Mammary epithelial cell (primary cell): ENCODE measurements at regions of chr2 and their contacts with region 1.

Region 1: DNA sequence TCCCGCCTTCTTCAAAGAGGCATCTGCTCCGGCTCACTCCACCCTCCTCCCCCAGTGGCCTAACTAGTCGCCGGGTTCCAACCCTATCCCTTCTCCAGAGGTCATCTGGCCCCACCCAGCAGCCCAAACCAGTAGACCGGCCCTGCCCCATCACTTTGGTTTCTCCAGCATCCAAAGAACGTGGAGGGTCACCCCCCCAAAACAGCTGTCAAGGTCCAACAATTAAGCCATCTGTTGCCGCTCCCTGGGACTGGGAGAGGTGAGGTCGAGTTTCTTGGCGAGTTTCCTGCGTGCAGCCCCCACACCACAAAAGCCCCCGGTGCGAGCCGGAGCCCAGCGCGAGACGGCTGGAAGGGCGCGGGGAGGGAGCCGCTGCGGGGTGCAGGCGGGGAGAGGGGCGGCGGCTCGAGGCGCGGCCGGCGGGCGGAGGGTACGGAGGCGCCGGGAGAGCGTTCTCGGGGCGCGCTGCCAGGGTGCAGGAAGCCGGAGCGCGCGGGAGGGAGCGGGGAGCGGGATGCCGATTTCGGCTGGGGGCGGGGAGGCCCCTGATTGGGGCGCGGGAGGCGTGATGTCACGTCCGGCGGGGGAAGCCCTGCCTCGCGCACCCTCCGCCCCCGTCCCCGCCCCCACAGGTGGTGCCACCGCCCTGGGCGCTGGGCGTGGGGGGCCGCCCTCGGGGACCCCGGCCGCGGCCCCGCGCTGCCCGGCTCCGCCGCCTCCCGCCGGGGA is 571 bp upstream of the GPC1 start:
- DNase-seq: peak; percentile 91
- H3K4me3 ChIP-seq: peak overlapping the region; percentile 65 to 84 (median 70)
- H3K27ac ChIP-seq: peak overlapping the region; percentile 83
- H3K4me1 ChIP-seq: peaks cover 48% of the 10 kb centered on the region
- H3K27me3 ChIP-seq: no peaks in the 10 kb centered on the region
- CTCF ChIP-seq: no peak

Region 2: DNA sequence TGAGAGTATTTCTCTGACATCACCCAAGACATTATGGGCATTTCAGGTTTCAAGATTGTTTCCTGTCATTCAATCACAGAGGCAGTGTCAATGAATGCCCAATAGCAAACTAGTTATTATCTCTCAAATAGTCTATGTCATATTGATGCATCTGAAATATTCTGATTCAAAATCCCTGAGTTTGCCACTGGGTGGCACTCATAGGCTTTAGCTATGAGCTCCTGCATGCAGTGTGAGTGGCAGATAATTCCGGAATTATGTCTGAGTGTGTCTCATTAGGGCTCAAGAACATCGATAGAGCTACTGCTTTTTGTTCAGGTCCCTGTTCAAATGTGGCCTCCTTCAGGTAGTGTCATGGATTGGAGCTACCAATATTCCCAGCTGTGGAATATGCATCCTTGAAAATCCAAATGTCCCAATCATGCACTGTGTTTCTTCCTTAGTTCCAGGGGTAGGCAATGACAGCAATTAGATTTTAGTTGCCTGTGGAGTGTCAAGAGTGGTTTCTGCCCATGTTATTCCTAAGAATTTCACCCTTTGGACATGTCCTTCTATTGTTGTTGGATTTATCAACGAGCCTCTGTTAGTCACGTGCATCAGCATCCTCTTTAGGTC is 373.8 kb before region 1 on chr2:
- CTCF ChIA-PET with region 1: no interaction called
- dilution Hi-C with region 1: no loop called
- in situ Hi-C with region 1: no loop called
- intact Hi-C with region 1: loop called (anchors 5 kb)
- DNase-seq: peak; percentile 45
- H3K4me3 ChIP-seq: no peak overlapping the region
- H3K27ac ChIP-seq: no peak overlapping the region
- H3K4me1 ChIP-seq: no peaks in the 10 kb centered on the region
- H3K27me3 ChIP-seq: peaks cover 6% of the 10 kb centered on the region
- CTCF ChIP-seq: peak; percentile 37 to 74

Region 3: DNA sequence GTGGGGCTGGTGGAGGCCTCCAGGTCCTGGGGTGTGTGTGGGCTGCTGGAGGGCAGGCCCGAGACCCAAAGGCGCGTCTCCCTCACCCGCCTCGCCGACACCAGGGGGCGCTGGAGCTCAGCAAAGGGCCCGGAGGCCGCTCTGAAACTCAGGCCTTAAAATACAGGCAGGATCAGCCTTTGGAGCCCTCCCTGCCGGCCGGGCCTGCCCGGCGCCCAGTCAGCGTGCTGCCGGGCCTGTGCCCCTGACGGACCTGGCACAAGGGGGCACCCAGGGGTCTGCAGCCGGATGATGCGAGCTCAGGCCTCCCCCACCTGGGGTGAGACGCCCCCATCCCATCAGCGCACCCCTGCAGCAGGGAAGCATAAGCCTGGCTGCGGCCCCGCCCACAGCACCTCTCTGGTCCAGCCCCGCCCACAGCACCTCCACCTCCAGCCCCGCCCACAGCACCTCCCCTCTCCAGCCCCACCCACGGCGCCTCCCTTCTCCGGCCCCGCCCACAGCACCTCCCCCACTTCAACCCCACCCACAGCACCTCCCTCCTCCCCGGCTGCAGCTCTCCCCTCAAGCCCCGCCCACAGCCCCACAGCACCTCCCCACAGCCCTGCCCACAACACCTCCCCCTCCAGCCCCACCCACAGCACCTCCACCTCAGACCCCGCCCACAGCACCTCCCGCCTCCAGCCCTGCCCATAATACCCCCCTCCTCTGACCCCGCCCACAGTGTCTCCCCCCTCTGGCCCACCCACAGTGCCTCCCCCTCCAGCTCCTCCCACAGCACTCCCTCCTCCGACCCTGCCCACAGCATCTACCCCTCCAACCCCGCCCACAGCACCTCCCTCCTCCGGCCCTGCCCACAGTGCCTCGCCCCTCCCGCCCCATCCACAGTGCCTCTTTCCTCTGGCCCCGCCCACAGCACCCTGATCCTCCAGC is 201.7 kb before region 1 on chr2:
- CTCF ChIA-PET with region 1: no interaction called
- dilution Hi-C with region 1: loop called (anchors 10 kb)
- in situ Hi-C with region 1: loop called (anchors 5 kb)
- intact Hi-C with region 1: loop called (anchors 1 kb)
- DNase-seq: peak; percentile 84
- H3K4me3 ChIP-seq: peak overlapping the region; percentile 39 to 52 (median 50)
- H3K27ac ChIP-seq: no peak overlapping the region
- H3K4me1 ChIP-seq: peaks cover 24% of the 10 kb centered on the region
- H3K27me3 ChIP-seq: no peaks in the 10 kb centered on the region
- CTCF ChIP-seq: peak; percentile 64 to 93

Region 4: GRCh38 chr2:240303896-240304745 is 130.8 kb before region 1 on chr2:
- CTCF ChIA-PET with region 1: no interaction called
- dilution Hi-C with region 1: no loop called
- in situ Hi-C with region 1: no loop called
- intact Hi-C with region 1: loop called (anchors 2 kb)
- DNase-seq: no peak
- H3K4me3 ChIP-seq: no peak overlapping the region
- H3K27ac ChIP-seq: no peak overlapping the region
- H3K4me1 ChIP-seq: no peaks in the 10 kb centered on the region
- H3K27me3 ChIP-seq: no peaks in the 10 kb centered on the region
- CTCF ChIP-seq: no peak

Region 5: GRCh38 chr2:240369801-240370585 is 64.9 kb before region 1 on chr2:
- CTCF ChIA-PET with region 1: no interaction called
- dilution Hi-C with region 1: no loop called
- in situ Hi-C with region 1: loop called in 1 of 2 experiments (anchors 10 kb)
- intact Hi-C with region 1: loop called (anchors 1 kb)
- DNase-seq: peak; percentile 94
- H3K4me3 ChIP-seq: no peak overlapping the region
- H3K27ac ChIP-seq: peak overlapping the region; percentile 75
- H3K4me1 ChIP-seq: peaks cover 32% of the 10 kb centered on the region
- H3K27me3 ChIP-seq: no peaks in the 10 kb centered on the region
- CTCF ChIP-seq: peak in 1 of 2 donors; percentile 16

Region 6: DNA sequence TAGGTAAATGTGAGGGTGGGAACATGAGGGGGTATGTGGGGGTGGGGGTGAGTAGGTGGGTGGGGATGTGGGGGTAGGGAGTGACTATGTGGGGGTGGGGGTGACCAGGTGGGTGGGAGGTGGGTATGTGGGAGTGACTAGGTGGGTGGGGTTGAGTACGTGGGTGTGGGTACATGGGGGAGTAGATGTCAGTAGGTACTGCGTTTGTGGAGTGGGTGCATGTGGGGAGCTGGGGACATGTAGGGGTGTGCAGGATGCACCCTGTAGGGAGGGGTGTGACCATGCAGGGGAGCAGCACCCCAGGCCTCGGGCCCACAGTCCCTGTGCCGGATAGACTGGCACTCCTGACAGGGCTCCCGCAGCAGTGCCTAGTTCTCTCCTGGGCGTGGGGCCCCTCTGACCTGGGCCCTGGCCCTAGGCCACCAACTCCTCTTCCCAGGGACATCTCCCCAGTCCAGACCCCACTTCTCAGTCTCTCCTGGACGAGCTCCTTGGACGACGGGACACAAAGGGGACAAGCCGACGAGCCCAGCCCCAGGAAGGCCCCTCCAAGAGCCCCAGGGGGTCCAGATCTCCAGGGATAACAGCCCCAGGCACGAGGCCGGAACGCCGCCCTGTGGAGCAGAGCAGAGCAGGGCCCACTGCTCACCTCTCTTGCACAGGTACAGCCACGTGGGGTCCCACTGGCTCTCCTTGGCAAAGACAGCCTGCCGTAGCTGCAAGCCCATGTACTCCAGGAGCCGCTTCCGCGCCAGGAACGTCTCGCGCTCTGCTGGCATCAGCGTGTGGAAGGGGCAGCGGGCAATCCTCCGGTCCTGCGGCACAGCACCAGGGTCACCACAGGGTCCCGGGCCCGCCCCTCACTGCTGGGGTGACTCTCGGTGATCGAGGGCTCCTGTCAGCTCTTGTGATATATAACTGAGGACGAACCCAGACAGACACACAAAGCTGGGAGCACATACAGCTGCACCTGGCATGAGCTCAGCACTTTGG is 64.7 kb after region 1 on chr2:
- CTCF ChIA-PET with region 1: no interaction called
- dilution Hi-C with region 1: no loop called
- in situ Hi-C with region 1: no loop called
- intact Hi-C with region 1: loop called (anchors 1 kb)
- DNase-seq: no peak
- H3K4me3 ChIP-seq: no peak overlapping the region
- H3K27ac ChIP-seq: no peak overlapping the region
- H3K4me1 ChIP-seq: no peaks in the 10 kb centered on the region
- H3K27me3 ChIP-seq: no peaks in the 10 kb centered on the region
- CTCF ChIP-seq: no peak